ENCODE measurements at regions of chr11 and their contacts with region 1.

Region 1: DNA sequence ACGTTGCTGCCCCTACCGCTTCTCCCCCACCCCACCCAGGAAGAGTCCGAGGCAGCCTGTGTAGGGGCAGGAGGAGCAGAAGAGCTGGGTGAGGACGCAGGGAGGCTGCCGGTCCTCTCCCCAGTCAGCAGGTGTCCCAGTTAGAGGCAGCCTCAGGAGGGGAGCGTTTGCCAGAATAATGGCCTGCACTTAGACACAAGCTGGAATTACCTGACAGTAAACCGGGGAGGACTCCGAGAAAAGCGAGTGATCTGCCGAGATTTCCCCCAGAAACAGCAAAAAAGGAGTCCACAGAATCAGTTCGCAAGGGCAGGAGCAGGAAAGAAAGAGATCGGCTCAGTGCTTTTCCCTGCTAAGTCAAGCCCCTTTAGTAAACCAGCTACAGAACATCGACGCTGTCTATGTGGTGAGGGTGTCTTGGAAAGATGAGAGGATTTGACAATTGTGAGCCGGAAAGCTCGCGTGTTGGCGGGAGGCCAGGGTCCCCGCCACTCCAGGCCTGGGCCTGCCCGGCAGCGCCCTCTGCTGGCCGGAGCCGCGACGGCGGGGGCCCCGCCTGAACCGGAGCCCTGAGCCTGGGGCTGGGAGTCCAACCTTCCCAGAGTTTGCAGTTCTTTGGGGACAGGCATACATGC is 17.7 kb upstream of the THRSP start:
- DNase-seq: peak in 1 of 2 experiments; percentile 95
- H3K4me3 ChIP-seq: peak overlapping the region in 3 of 4 experiments; percentile 13 to 44 (median 27); a peak in 4 of 8 replicates
- H3K27ac ChIP-seq: no peak overlapping the region
- H3K4me1 ChIP-seq: peaks cover 0 to 11% (median 4%) of the 10 kb centered on the region in 4 experiments; a peak in 5 of 7 replicates
- H3K27me3 ChIP-seq: no peaks in the 10 kb centered on the region
- CTCF ChIP-seq: peak; percentile 92 to 97 (median 96)
- EP300 ChIP-seq: 0 out of 3 replicates have a peak, but pooled peaks of 1 of the 2 experiments have one; percentile 21
- POLR2A ChIP-seq: no peak
- RAD21 ChIP-seq: peak; percentile 84 to 92

Region 2: GRCh38 chr11:77851503-77851902 is 194.5 kb before region 1 on chr11:
- CTCF ChIA-PET with region 1: no interaction called
- POLR2A ChIA-PET with region 1: no interaction called
- DNase-seq: no peak
- H3K4me3 ChIP-seq: no peak overlapping the region
- H3K27ac ChIP-seq: no peak overlapping the region
- H3K4me1 ChIP-seq: no peaks in the 10 kb centered on the region
- H3K27me3 ChIP-seq: no peaks in the 10 kb centered on the region
- CTCF ChIP-seq: no peak
- EP300 ChIP-seq: no peak
- POLR2A ChIP-seq: no peak
- RAD21 ChIP-seq: no peak

Region 3: DNA sequence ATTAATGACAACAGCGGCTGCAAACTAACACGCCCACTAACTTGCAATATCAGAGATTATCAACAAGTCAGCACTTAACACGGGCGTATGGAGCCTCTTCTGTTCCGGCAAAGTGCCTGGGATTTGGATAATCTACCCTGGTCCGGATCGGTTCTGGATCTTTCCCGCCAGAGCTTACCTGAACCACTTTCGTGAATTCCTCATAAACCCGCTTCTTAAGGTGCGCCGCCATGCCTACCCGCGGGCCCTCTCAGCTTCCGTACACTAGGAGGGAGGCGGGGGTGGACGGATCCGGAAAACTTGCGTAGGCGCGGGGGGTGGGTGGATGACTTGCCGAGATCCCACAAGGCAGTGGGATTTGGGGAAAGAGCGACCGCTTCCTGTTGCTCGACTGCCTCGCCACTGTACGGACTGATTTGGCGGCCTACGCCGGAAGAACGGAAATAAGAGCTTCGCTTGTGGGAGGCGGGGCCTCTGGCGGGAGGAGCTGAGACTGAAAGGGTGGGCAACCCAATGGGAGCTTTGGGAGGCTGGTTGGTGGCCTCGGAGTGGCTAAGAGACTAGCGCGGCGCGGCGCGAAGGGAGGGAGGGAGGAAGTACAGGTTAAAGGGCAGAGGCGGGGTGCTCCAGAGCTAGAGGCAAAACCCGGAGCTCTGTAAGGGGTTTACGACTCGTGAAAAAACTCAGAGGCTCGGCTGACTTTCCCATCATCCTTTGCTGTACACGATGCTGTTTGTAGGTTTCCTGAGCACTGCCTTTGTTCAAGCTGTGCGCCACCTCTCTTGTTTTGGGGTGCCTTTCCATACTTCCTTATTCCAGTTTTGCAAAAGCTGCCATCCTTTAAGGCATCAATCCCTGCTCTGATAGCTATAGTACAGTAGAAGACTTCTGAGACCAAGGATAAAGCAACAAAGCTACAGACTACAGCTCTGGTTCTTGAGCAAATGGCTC is 51.3 kb before region 1 on chr11 and contains the start of gene INTS4:
- CTCF ChIA-PET with region 1: interaction called, 53 read pairs
- POLR2A ChIA-PET with region 1: interaction called, 5 read pairs
- DNase-seq: peak; percentile 91 to 99
- H3K4me3 ChIP-seq: peak within 1 kb of the TSS; percentile 81 to 92 (median 84)
- H3K27ac ChIP-seq: peak within 1 kb of the TSS; percentile 60; the same call in 1 of the 2 replicates
- H3K4me1 ChIP-seq: peaks cover 0 to 4% (median 1%) of the 10 kb centered on the region in 4 experiments; a peak in 4 of 7 replicates
- H3K27me3 ChIP-seq: no peaks in the 10 kb centered on the region
- CTCF ChIP-seq: no peak
- EP300 ChIP-seq: 0 out of 3 replicates have a peak, but pooled peaks of 1 of the 2 experiments have one; percentile 21
- POLR2A ChIP-seq: peak; percentile 62 to 78
- RAD21 ChIP-seq: no peak; a peak in 1 of 4 replicates
- total RNA-seq, gene INTS4: 31.3 and 33.4 TPM in 2 replicates

Region 4: GRCh38 chr11:78010310-78010709 is 35.7 kb before region 1 on chr11:
- CTCF ChIA-PET with region 1: interaction called, 23 read pairs
- POLR2A ChIA-PET with region 1: no interaction called
- DNase-seq: no peak
- H3K4me3 ChIP-seq: no peak overlapping the region
- H3K27ac ChIP-seq: no peak overlapping the region
- H3K4me1 ChIP-seq: no peaks in the 10 kb centered on the region
- H3K27me3 ChIP-seq: no peaks in the 10 kb centered on the region
- CTCF ChIP-seq: no peak
- EP300 ChIP-seq: no peak
- POLR2A ChIP-seq: no peak
- RAD21 ChIP-seq: no peak

Region 5: DNA sequence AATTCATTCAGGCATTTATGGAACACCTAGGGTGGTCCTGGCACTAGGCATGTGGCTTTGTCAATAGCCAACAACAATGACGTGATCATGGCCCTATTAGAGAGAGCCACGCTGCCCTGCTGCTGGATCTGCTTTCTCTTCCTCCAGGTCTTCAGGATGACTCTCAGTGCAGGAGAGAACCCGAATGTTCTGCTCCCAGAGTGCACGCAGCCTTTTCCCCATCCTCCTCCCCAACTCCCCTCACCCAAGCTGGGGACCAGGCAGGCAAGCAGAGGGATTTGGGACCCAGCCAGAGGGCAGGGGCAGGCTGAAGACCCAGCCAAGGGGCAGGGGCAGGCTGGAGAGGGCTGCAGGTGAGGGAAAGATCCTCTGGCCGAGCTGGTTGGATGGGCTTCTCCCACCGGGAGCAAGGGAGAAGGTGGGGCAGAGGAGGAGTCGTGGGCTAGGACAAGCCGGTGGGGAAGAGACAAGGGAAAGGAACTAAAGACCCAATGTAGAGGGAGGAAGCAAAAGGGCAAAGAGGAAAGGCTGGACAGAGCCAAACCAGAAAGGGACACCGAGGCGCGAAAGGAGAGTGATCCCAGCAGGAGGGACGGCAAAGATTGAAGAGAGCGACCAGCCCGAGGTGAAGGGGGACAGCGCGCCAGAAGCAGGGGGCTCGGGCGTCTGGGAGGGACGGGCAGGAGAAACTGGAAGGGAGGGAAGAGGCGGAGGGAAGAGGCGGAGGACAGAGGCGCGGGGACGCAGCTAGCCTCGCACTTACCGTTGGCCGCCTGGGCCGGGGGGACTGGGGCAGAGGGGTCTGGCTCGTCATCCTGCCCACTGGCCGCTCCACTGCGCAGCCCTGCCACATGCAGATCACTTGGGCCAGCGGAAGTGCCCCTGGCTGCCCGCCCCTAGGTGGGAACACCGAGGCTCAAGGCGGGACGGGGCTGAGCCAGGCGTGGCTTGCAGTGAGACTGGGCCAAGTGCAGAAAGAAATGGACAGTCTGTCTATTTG is 23.3 kb before region 1 on chr11 and contains the start of gene KCTD14:
- CTCF ChIA-PET with region 1: interaction called, 16 read pairs
- POLR2A ChIA-PET with region 1: interaction called, 6 read pairs
- DNase-seq: peak in 1 of 2 experiments; percentile 78
- H3K4me3 ChIP-seq: peak within 1 kb of the TSS; percentile 43 to 75 (median 64)
- H3K27ac ChIP-seq: peak within 1 kb of the TSS; percentile 35; the same call in 1 of the 2 replicates
- H3K4me1 ChIP-seq: peaks cover 0 to 13% (median 8%) of the 10 kb centered on the region in 4 experiments; a peak in 6 of 7 replicates
- H3K27me3 ChIP-seq: no peaks in the 10 kb centered on the region
- CTCF ChIP-seq: no peak
- EP300 ChIP-seq: no peak
- POLR2A ChIP-seq: peak; percentile 10 to 88
- RAD21 ChIP-seq: no peak
- total RNA-seq, gene KCTD14: 21.6 and 22.7 TPM in 2 replicates

Region 6: DNA sequence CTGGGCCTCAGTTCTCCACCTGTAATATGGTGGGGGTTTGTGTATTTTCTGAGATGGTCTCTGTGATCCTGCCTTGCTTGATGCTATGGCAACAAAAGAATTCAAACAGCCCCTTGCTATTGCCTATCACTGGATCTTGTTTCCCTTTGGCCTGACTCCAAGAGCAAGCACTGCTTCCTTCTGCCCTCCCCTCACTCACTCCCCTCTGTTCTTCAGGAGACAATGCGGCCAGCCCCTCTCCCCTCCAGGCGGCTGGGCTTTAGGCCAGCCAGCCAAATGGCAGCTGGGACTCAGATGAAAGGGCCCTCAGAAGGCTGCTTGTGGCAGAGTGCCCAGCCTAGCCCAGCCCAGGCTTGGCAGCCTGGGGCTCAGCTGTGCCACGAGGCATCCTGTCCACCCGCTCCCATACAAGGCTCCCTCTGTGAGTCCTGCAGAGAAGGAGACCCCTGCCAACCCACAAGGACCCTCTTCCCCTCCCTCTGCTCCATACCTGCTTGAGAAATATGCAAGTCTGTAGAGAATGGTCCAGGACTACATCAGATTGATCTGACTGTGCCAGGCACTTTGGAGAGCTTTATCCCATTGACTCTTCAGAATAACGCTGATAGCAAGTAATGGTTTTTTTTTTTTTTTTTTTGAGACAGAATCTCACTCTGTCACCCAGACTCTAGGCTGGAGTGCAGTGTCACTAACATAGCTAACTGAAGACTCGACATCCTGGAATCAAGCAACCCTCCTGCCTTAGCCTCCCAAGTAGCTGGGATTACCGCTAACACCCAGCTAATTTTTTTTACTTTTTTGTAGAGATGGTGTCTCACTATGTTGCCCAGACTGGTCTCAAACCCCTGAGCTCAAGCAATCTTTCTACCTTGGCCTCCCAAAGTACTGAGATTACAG is 15.3 kb before region 1 on chr11:
- CTCF ChIA-PET with region 1: interaction called, 92 read pairs
- POLR2A ChIA-PET with region 1: no interaction called
- DNase-seq: no peak
- H3K4me3 ChIP-seq: no peak overlapping the region
- H3K27ac ChIP-seq: no peak overlapping the region
- H3K4me1 ChIP-seq: peaks cover 0 to 6% (median 0%) of the 10 kb centered on the region in 4 experiments; a peak in 1 of 7 replicates
- H3K27me3 ChIP-seq: no peaks in the 10 kb centered on the region
- CTCF ChIP-seq: no peak
- EP300 ChIP-seq: no peak
- POLR2A ChIP-seq: no peak
- RAD21 ChIP-seq: no peak

Region 7: DNA sequence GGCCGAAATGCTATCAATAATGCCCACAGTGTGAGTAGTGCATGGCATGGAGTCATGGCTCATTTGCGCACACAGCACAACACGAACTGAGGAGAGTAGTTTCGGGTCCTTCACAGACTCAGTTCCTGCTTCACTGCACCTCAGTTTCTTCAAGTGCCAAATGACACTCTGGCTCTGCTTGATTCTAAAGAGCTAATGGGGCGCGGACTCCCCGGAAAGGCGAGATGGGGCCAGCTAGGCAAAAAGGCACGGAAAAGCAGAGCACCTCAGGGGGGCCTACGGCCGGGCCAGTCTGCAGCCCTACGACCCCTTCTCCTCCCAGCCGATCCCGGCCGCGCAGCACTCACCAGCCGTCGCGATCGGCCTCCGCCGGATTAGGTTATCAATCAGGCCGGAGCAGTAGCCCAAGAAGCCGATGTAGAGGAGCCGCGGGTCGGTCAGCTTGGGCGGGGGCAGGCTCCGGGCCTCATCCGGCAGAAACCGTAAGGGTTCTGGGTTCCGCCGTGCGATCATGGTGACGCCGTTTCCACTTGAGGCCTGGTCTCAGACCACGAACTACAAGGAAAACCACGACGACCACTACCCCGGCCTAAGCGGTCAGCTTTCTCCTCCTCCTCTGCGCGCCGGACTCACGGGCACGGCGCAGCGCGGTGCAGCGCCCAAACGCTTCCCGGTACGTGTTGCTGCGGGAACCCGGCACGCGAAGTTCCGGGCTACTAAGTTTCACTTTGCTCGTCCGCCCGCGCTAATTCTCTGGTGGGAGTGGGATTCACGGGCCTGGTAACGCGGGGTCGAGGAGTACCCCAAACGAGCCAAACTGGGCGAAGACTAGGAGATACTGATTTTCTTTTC is 33.5 kb after region 1 on chr11 and contains the start of gene NDUFC2:
- CTCF ChIA-PET with region 1: interaction called, 12 read pairs
- POLR2A ChIA-PET with region 1: interaction called, 4 read pairs
- DNase-seq: peak; percentile 27 to 83
- H3K4me3 ChIP-seq: peak within 1 kb of the TSS; percentile 84 to 96 (median 92)
- H3K27ac ChIP-seq: peak within 1 kb of the TSS; percentile 82
- H3K4me1 ChIP-seq: peaks cover 0 to 9% (median 3%) of the 10 kb centered on the region in 4 experiments; a peak in 2 of 7 replicates
- H3K27me3 ChIP-seq: no peaks in the 10 kb centered on the region
- CTCF ChIP-seq: 0 out of 4 replicates have a peak, but pooled peaks of 1 of the 3 experiments have one; percentile 4
- EP300 ChIP-seq: peak in 1 of 2 experiments; percentile 78; a peak in 1 of 3 replicates
- POLR2A ChIP-seq: peak; percentile 85 to 98
- RAD21 ChIP-seq: no peak
- total RNA-seq, gene NDUFC2: 216 and 218 TPM in 2 replicates

Region 8: GRCh38 chr11:78212586-78213371 is 166.8 kb after region 1 on chr11:
- CTCF ChIA-PET with region 1: no interaction called
- POLR2A ChIA-PET with region 1: no interaction called
- DNase-seq: no peak
- H3K4me3 ChIP-seq: no peak overlapping the region
- H3K27ac ChIP-seq: no peak overlapping the region
- H3K4me1 ChIP-seq: no peaks in the 10 kb centered on the region; a peak in 1 of 7 replicates
- H3K27me3 ChIP-seq: no peaks in the 10 kb centered on the region
- CTCF ChIP-seq: no peak
- EP300 ChIP-seq: no peak
- POLR2A ChIP-seq: no peak
- RAD21 ChIP-seq: no peak